ENCODE measurements at regions of chr19 and their contacts with region 1.

Region 1: DNA sequence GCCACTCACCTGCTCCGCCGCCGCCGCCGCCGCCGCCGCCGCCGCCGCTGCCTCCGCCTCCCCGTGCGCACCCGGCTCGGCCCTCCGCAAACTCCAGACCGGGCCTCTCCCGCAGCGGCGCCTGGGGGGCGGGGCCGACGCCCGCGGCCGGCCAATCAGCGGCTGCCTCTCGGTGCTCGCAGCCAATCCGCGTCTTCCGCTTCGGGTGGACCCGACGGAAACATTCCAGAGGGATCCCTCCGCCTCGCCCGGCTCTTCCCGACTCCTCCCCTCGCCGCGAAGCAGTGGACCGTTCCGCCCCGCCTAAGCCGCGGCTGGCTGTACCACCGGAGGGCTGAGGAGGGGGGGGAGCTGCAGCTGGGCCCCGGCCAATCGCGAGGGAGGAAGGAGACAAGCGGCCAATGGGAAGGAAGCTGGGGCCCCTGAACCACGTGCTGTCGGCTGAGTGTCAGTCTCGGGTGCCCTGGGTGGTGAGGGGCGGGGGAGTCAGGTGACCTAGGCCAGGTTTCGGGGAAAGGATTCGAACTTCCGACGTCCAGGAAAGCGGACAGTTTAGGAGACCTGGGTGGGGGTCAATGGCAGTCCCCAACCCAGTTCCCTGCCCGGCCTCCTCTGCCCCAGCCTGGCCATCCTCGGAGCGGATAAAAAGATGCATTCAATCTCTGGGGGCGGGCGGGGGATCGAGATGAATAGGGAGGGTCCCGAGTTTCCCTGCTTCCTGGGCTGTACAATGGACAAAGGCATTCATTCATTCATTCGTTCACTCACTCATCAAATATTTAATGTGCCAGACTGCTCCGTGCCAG is at the start of gene GIPC1:
- DNase-seq: peak; percentile 66 to 76 (median 67)
- H3K4me3 ChIP-seq: peak within 1 kb of the TSS; percentile 25 to 75 (median 55)
- H3K4me3 Mint-ChIP-seq: peak within 1 kb of the TSS; percentile 71 to 83
- H3K27ac ChIP-seq: no peak within 1 kb of the TSS
- H3K27ac Mint-ChIP-seq: peak within 1 kb of the TSS in 3 of 7 donors; percentile 4 to 54 (median 35)
- H3K4me1 ChIP-seq: peaks cover 23 to 25% of the 10 kb centered on the region in 2 donors
- H3K4me1 Mint-ChIP-seq: peaks cover 23% of the 10 kb centered on the region
- H3K27me3 ChIP-seq: no peaks in the 10 kb centered on the region
- H3K27me3 Mint-ChIP-seq: peaks cover 7 to 22% (median 11%) of the 10 kb centered on the region in 3 donors
- CTCF ChIP-seq: no peak
- polyA plus RNA-seq, gene GIPC1: 4.0 to 6.2 (median 4.8) TPM

Region 2: GRCh38 chr19:14472202-14472938 is 23.9 kb before region 1 on chr19:
- intact Hi-C with region 1: no loop called
- DNase-seq: peak; percentile 45 to 61 (median 51)
- H3K4me3 ChIP-seq: no peak overlapping the region
- H3K4me3 Mint-ChIP-seq: peak overlapping the region in 1 of 2 donors; percentile 74
- H3K27ac ChIP-seq: no peak overlapping the region
- H3K27ac Mint-ChIP-seq: no peak overlapping the region
- H3K4me1 ChIP-seq: peaks cover 38 to 56% of the 10 kb centered on the region in 2 donors
- H3K4me1 Mint-ChIP-seq: peaks cover 35% of the 10 kb centered on the region
- H3K27me3 ChIP-seq: peaks cover 18 to 38% of the 10 kb centered on the region in 2 donors
- H3K27me3 Mint-ChIP-seq: peaks cover 31 to 55% (median 34%) of the 10 kb centered on the region in 3 donors
- CTCF ChIP-seq: peak; percentile 100

Region 3: DNA sequence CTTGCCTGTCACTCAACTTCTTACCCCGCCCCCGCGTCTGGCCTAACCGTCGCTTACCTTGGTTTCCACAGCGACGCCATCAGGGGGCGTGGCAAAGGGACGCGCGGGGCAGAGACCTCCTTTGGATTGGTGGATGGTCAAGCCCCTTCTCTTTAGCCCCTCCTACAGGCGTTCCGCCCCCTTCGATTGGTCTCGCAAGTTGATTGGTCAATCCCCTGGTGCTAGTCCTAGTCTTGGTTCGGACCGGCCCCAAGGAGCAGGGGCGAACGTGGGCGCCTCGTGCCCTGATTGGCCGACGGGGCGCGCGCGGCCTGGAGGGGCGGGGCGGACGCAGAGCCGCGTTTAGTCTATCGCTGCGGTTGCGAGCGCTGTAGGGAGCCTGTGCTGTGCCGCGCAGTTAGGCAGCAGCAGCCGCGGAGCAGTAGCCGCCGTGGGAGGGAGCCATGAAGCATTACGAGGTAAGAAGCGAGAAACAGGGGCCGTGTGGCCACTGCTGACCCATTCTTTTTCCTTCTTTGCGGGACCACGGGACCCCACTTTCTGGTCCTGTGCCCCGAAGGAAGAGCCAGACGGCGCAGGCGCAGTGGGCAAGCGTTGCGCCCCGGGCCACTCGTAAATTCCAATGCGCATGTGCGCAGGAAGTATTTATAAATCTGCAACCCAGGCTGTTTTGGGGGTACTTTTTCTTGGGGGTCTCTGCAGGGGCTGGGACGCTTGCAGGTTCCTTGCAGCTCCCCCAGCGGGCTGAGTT is 33.2 kb after region 1 on chr19 and contains the start of gene TECR:
- intact Hi-C with region 1: loop called in 1 of 2 experiments (anchors 5 kb)
- DNase-seq: peak; percentile 100
- H3K4me3 ChIP-seq: peak within 1 kb of the TSS; percentile 54 to 93 (median 88)
- H3K4me3 Mint-ChIP-seq: peak within 1 kb of the TSS; percentile 87 to 96
- H3K27ac ChIP-seq: peak within 1 kb of the TSS; percentile 78 to 83
- H3K27ac Mint-ChIP-seq: peak within 1 kb of the TSS; percentile 95 to 99 (median 98)
- H3K4me1 ChIP-seq: peaks cover 32 to 34% of the 10 kb centered on the region in 2 donors
- H3K4me1 Mint-ChIP-seq: peaks cover 28% of the 10 kb centered on the region
- H3K27me3 ChIP-seq: no peaks in the 10 kb centered on the region
- H3K27me3 Mint-ChIP-seq: no peaks in the 10 kb centered on the region
- CTCF ChIP-seq: no peak
- polyA plus RNA-seq, gene TECR: 59.8 to 79.6 (median 76.7) TPM

Measured in CD14-positive monocyte (primary cell).